Calu3 (cell line): ENCODE measurements at regions of chr15 and their contacts with region 1.

Region 1: DNA sequence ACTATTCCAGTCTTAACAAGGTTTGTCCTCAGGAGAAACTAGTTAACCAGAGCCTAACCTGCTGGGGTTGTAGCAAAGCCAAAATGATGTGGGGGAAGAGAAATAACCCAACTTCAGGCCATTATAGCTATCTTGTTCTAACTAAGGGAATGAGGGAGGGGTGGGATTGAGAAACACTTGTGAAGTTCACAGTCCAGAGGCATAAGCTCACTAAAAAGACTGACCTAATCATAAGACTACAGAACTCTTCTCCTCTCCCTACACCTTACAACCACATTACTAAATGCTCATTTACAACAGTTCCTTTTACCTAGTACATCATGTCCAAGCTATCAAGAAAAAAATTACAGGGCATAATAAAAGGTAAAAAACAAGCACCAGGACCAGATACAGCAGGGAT is 52.8 kb downstream of the UBE3A start:
- DNase-seq: no peak
- H3K4me3 Mint-ChIP-seq: no peak overlapping the region
- H3K27ac Mint-ChIP-seq: no peak overlapping the region
- H3K4me1 Mint-ChIP-seq: no peaks in the 10 kb centered on the region
- H3K27me3 Mint-ChIP-seq: no peaks in the 10 kb centered on the region
- CTCF ChIP-seq: no peak

Region 2: DNA sequence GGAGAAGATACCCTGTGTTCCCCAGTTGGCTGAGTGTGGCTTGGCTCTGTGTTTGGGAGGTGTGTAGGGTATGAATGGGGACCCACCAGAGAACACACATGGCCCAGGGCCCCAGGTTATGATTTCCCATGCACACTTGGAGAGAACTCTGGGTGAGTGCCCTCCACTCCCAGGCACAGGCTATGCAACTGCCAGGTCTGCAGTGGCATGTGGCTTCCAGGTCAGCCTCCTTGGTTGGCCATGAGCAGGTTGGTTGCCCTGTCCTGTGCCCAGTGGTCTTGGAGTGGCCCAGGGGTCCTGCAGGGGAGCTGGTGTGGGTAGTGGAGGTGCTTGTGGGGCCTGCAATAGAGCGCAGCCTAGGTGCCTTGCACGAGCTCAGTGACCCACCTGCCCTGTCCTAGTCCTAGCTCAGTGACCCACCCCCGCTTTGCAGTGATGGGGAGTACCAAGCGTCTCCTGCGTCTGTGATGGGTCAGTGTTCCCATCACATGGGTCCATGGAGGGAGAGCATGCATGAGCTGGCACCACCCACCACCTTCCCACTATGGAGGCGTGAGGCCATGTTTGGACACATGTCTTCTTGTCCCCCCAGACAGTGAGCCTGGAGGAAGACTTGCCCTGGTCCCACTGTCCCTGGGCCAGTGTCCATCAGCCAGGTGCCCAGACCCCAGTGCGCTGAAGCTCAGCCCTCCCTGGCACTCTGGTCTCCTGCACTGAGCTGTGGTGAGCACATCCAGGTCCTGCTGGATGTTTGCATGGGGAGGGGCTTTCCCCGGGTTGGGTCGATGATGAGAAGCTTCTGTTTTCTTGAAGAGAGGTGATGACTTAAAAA is 213.9 kb before region 1 on chr15:
- CTCF ChIA-PET with region 1: no interaction called
- intact Hi-C with region 1: no loop called
- DNase-seq: no peak
- H3K4me3 Mint-ChIP-seq: no peak overlapping the region
- H3K27ac Mint-ChIP-seq: no peak overlapping the region
- H3K4me1 Mint-ChIP-seq: no peaks in the 10 kb centered on the region
- H3K27me3 Mint-ChIP-seq: no peaks in the 10 kb centered on the region
- CTCF ChIP-seq: no peak

Region 3: DNA sequence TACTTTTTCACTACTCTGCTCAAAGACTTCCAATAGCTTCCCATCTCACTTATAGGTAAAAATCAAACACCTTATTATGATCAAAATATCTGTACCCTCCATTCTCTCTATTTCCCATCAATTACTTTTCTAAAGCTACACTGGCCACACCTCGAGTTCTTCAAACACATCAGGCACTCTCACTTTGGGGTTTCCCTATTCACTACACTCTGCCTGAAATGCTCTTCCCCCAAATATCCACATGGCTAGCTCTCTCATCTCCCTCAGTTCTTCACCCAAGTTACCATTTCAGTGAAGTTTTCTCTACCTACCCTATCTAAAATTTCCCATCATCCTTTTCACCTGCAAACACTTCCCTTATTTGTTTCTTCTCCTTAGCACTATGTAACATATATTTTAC is 38.1 kb after region 1 on chr15:
- CTCF ChIA-PET with region 1: no interaction called
- intact Hi-C with region 1: loop called (anchors 2 kb)
- DNase-seq: no peak
- H3K4me3 Mint-ChIP-seq: no peak overlapping the region
- H3K27ac Mint-ChIP-seq: peak overlapping the region; percentile 65
- H3K4me1 Mint-ChIP-seq: peaks cover 8% of the 10 kb centered on the region
- H3K27me3 Mint-ChIP-seq: no peaks in the 10 kb centered on the region
- CTCF ChIP-seq: no peak

Region 4: GRCh38 chr15:26013981-26014380 is 628.0 kb after region 1 on chr15:
- CTCF ChIA-PET with region 1: no interaction called
- intact Hi-C with region 1: no loop called
- DNase-seq: no peak
- H3K4me3 Mint-ChIP-seq: no peak overlapping the region
- H3K27ac Mint-ChIP-seq: no peak overlapping the region
- H3K4me1 Mint-ChIP-seq: no peaks in the 10 kb centered on the region
- H3K27me3 Mint-ChIP-seq: no peaks in the 10 kb centered on the region
- CTCF ChIP-seq: no peak